ENCODE measurements at regions of chr14 and their contacts with region 1.

Region 1: DNA sequence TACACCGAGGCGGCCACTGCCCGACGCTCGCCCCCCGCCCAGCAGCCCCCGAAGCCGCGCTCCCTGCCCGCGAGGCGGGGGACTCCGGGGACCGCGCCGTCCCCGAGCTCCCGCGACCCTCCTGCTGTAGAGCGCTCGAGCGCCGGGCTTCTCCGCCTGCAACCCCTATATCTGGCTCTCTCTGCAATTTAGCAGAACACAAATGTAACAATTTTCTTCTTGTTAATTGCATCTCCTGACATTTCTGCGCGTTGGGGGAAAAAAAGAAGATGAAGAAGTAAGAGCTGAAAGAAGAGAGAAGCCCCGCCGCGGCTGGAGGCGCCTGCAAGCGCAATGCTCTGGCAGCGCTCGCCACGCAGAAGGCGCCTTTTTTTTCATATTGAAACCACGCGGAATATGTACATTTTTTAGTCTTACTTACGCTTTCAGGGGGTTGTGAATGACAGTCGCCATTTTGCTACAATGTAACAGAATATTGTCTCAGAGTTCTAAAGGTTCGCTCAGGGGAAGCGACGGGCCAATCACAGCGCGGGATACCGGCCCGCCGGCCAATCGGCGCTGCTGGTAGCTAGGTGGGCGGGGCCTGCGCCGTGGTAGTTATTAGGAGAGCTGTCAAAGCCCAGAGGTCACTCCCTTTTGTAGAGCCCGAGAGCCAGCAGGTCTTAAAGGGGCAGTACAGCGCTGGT is at the start of gene DPF3:
- DNase-seq: peak; percentile 93 to 99 (median 96)

Region 2: GRCh38 chr14:72715215-72715849 is 178.4 kb before region 1 on chr14:
- intact Hi-C with region 1: loop called (anchors 5 kb)
- DNase-seq: peak in 3 of 10 donors; percentile 19 to 80 (median 37)

Region 3: GRCh38 chr14:72792051-72792788 is 101.6 kb before region 1 on chr14:
- intact Hi-C with region 1: loop called (anchors 5 kb)
- DNase-seq: peak in 9 of 10 donors; percentile 30 to 92 (median 53)

Region 4: DNA sequence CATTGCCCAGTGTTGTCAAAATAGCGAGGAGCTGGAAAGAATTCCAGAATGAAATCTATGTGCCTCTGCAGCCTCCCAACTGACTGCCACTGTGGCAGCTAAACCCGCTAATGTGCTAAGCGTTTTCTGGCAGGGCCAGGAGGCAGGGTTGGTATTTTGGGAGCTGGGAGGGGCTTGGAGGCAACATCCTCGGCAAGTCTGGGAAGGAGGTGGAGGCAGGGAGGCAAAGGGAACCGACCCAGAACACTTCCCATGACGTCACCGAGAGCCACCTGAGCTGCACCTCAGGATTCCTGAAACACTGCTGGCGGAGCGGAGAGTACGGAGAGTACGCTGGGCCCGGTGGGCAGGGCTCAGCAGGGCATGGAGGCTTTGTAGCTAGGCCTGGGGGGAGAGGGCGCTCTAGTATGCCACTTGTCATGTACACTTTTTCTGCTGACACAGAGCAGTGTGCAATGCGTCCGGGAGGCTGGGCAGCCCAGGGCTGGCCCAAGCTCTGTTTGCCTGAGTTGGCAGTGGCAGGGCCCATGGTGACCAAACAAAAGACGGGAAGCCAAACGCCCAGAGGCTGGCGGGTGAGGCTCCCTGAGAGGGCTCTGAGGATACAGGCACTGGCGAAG is 81.4 kb before region 1 on chr14:
- intact Hi-C with region 1: loop called (anchors 5 kb)
- DNase-seq: peak; percentile 44 to 94 (median 62)

Region 5: DNA sequence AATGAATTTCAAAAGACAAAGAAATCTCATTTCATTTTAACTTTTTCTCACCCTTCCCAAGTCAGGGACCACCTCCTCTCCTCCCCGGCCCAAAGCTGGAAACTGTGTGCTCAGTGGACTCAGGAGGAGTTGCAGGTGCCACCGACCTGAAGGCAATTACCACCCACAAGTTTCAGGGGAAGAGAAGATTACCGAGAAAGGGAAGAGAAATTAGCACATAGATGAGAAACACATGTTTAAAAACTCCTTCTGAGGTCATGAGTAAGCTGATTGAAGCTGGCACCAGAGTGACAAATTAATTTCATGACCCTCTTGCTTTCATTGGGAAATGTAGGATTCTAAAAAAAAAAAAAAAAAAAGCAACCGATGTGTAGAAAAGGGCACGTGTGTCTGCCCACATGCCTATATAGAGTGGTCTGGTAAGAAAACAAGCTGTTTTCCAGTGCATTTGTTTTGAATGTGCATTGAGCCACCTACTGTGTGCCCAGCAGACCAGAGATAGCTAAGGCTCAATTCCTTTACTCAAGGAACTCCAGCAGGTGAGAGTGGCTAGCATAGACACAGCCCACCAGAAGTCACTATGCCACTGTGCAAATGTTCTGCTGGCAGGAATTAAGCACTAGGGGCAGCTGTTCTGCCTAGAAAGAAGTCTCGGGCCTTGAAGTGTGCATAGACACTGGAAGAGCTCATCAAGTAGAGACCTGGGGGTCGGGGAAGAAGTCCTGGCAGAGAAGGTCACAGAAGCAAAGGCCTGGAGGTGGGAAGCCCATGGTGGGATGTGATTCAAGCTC is 30.4 kb before region 1 on chr14:
- intact Hi-C with region 1: no loop called
- DNase-seq: no peak